Activated T-helper 1 cell treated with anti-CD3 and anti-CD28 coated beads, Interleukin-12 subunit alpha, Interleukin-12 subunit beta, Interleukin-2, Interleukin-4 antibody, amounts not matched to agents 30 ng/mL and 10 ng/mL and 1 ng/mL, durations not matched to agents 14 hours and 24 hours and 36 hours (primary cell): ENCODE measurements at regions of chr22 and their contacts with region 1.

Region 1: DNA sequence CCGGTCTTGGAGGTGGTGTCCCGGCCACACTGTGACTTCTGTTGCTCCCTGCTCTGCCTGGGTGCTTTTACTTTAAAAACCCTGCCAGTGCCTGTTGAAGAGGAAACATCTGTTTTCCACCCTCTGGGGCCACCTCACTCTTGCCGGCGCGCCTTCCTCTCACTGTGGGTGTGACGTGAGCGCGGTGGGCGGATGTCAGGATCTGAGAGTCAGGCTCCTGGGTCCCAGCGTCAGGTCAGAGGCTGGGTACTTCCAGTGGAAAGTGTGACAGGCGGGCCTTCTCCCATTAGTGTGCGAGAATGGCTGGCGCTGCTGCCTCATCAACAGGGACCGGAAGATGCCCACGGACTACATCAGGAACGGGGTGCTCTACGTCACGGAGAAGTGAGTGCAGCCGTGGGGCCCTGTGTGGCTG is 54.2 kb downstream of the GRAMD4 start:
- DNase-seq: peak; percentile 83
- H3K4me3 Mint-ChIP-seq: peak overlapping the region; percentile 82
- H3K27ac Mint-ChIP-seq: peak overlapping the region; percentile 94
- H3K4me1 Mint-ChIP-seq: peaks cover 34% of the 10 kb centered on the region
- H3K27me3 Mint-ChIP-seq: no peaks in the 10 kb centered on the region

Region 2: GRCh38 chr22:46250035-46250782 is 424.2 kb before region 1 on chr22 and contains the start of gene CDPF1:
- intact Hi-C with region 1: loop called (anchors 1 kb)
- DNase-seq: peak; percentile 93
- H3K4me3 Mint-ChIP-seq: peak within 1 kb of the TSS; percentile 87
- H3K27ac Mint-ChIP-seq: peak within 1 kb of the TSS; percentile 74
- H3K4me1 Mint-ChIP-seq: peaks cover 31% of the 10 kb centered on the region
- H3K27me3 Mint-ChIP-seq: peaks cover 2% of the 10 kb centered on the region
- total RNA-seq, gene CDPF1: 9.5 and 14.2 TPM in 2 replicates

Region 3: DNA sequence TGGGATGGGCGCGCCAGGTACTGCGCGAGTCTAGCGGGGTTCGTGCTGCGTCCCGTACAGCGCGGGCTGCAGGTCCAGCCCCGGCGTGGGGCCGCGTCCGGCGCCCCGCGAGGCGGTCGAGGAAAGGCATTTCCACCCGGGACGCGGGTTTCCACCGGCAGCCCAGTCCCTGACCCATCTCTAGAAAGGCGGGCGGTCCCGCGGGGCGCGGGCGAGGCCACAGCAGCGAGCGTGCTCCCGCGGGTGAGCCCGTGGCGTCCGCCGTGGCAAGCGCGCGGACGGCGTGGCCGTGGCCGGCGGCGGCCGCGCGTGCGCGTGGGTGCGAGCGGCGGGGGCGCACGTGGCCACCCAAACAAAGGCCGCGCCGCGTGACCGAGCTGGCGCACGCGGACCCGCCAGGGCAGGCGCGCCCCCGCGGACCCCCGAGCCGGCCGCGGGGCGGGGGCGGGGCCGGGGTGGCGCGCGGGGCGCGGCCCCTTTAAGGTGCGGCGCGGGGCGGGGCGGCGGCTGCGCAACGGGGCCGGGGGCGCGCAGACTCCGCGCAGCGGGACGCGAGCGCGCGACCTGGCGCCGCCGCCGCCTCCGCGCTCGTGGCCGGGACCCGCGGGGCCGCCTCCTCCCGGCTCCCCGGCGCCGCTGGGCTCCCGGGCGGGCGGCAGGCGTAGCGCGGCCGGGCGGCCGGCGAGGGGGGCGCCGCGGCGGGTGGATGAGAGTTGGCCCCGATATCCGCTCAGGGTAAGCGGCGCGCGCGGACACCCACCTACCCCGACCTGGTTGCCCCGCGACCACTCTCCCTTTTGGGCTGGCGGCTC is 97.6 kb before region 1 on chr22:
- intact Hi-C with region 1: loop called (anchors 1 kb)
- DNase-seq: peak; percentile 58
- H3K4me3 Mint-ChIP-seq: peak overlapping the region; percentile 77
- H3K27ac Mint-ChIP-seq: no peak overlapping the region
- H3K4me1 Mint-ChIP-seq: peaks cover 38% of the 10 kb centered on the region
- H3K27me3 Mint-ChIP-seq: no peaks in the 10 kb centered on the region

Region 4: DNA sequence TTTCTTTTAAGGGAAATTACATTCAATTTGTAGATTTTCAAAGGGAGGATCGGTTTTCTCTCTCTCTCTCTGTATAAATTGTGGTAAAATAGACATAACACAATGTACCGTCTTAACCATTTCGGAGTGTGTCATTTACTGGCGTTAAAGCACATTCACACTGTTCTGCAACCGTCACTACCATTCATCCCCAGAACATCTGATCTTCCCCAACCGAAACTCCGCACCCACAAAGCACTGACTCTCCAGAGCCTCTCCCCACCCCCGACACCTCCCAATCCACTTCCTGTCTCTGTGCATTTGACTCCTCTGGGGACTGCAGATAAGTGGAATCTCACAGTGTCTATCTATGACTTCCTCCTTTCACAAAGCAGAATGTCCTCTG is 70.1 kb before region 1 on chr22:
- intact Hi-C with region 1: loop called (anchors 1 kb)
- DNase-seq: peak; percentile 67
- H3K4me3 Mint-ChIP-seq: peak overlapping the region; percentile 75
- H3K27ac Mint-ChIP-seq: peak overlapping the region; percentile 91
- H3K4me1 Mint-ChIP-seq: peaks cover 19% of the 10 kb centered on the region
- H3K27me3 Mint-ChIP-seq: peaks cover 2% of the 10 kb centered on the region

Region 5: DNA sequence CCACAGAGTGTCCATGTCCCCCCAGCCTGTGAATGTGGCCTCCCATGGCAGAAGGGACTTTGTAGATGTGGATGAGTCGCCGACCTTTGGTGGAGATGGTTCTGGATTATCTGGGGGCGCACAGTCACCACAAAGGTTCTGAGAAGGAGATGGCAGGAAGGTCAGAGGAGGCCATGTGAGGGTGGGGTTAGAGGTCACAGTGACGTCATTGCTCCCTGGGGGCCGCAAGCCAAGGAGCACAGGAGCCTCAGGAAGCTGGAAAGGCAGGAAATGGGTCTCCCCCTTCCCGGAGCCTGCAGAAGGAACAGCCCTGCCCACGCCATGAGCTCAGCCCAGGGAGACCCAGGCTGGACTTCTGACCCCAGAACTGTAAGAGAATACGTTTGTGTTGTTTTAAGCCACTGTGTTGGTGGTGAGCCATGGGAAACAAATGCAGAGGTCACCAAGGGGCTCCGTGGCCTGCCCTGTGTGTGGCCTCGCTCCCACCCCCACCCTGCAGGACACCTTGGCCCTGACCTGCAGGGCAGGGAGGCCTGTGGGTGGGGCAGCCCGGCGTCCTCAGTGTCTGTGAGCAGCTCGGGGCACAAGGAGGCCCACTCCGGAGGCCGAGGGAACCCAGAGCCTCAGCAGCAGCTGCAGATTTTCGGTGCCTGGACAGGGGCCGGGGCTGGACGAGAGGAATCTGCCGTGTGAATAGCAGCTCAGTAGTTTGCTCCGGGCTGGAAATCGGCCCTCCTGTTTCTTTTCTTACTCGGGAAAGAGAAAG is 22.1 kb before region 1 on chr22:
- intact Hi-C with region 1: loop called (anchors 1 kb)
- DNase-seq: no peak
- H3K4me3 Mint-ChIP-seq: peak overlapping the region; percentile 41
- H3K27ac Mint-ChIP-seq: peak overlapping the region; percentile 94
- H3K4me1 Mint-ChIP-seq: peaks cover 39% of the 10 kb centered on the region
- H3K27me3 Mint-ChIP-seq: no peaks in the 10 kb centered on the region

Region 6: GRCh38 chr22:46737976-46738646 is 63.7 kb after region 1 on chr22 and contains the start of gene CERK:
- intact Hi-C with region 1: loop called (anchors 1 kb)
- DNase-seq: peak; percentile 68
- H3K4me3 Mint-ChIP-seq: peak within 1 kb of the TSS; percentile 99
- H3K27ac Mint-ChIP-seq: peak within 1 kb of the TSS; percentile 97
- H3K4me1 Mint-ChIP-seq: peaks cover 46% of the 10 kb centered on the region
- H3K27me3 Mint-ChIP-seq: no peaks in the 10 kb centered on the region
- total RNA-seq, gene CERK: 69.6 and 76.5 TPM in 2 replicates

Region 7: DNA sequence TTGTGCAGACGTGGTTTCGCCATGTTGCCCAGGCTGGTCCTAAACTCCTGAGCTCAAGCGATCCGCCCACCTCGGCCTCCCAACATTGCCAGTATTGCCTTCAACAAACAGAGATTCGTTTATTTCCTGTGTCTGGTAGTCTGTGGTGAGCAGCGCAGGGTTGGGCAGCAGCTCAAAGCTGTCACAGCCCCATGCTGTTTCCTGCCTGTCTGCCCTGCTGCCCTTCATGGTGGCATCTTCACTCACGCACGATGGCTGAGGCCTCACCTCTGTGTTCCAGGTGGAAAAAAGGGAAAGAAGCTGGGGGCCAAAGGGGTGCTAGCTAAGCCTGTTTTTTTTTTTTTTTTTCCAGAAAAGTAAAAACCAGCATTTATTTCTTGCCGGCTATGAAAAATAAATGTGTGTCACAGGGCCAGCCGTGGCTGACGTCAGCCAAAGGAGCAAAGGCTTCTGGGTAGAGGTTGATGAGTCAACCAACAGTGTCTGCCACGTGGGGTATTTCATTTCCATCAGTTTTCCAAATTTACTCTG is 116.9 kb after region 1 on chr22:
- intact Hi-C with region 1: loop called (anchors 1 kb)
- DNase-seq: peak; percentile 71
- H3K4me3 Mint-ChIP-seq: peak overlapping the region; percentile 78
- H3K27ac Mint-ChIP-seq: peak overlapping the region; percentile 99
- H3K4me1 Mint-ChIP-seq: peaks cover 49% of the 10 kb centered on the region
- H3K27me3 Mint-ChIP-seq: no peaks in the 10 kb centered on the region